ENCODE measurements at regions of chr16 and their contacts with region 1.

Region 1: GRCh38 chr16:68528686-68529379 is 10.3 kb upstream of the ZFP90 start:
- DNase-seq: peak; percentile 90
- H3K4me3 ChIP-seq: no peak overlapping the region
- H3K27ac ChIP-seq: no peak overlapping the region
- H3K4me1 ChIP-seq: peaks cover 12% of the 10 kb centered on the region
- CTCF ChIP-seq: peak; percentile 87

Region 2: GRCh38 chr16:68590201-68590994 is 61.6 kb after region 1 on chr16:
- CTCF ChIA-PET with region 1: no interaction called
- POLR2A ChIA-PET with region 1: no interaction called
- intact Hi-C with region 1: loop called (anchors 2 kb)
- DNase-seq: peak; percentile 34
- H3K4me3 ChIP-seq: no peak overlapping the region
- H3K27ac ChIP-seq: no peak overlapping the region
- H3K4me1 ChIP-seq: no peaks in the 10 kb centered on the region
- CTCF ChIP-seq: peak; percentile 67

Region 3: DNA sequence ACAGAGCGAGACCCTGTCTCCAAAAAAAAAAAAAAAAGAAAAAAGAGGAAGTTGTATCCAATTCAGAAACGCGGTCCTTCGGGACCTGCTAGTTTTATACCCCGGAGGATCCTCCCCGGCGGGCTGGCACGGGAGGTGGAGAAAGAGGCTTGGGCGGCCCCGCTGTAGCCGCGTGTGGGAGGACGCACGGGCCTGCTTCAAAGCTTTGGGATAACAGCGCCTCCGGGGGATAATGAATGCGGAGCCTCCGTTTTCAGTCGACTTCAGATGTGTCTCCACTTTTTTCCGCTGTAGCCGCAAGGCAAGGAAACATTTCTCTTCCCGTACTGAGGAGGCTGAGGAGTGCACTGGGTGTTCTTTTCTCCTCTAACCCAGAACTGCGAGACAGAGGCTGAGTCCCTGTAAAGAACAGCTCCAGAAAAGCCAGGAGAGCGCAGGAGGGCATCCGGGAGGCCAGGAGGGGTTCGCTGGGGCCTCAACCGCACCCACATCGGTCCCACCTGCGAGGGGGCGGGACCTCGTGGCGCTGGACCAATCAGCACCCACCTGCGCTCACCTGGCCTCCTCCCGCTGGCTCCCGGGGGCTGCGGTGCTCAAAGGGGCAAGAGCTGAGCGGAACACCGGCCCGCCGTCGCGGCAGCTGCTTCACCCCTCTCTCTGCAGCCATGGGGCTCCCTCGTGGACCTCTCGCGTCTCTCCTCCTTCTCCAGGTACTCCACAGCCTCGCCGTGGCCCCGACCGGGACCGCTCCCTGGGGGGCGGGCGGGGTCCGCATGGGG is 116.1 kb after region 1 on chr16 and contains the start of gene CDH3:
- CTCF ChIA-PET with region 1: no interaction called
- POLR2A ChIA-PET with region 1: no interaction called
- intact Hi-C with region 1: no loop called
- DNase-seq: no peak
- H3K4me3 ChIP-seq: no peak within 1 kb of the TSS
- H3K27ac ChIP-seq: no peak within 1 kb of the TSS
- H3K4me1 ChIP-seq: no peaks in the 10 kb centered on the region
- CTCF ChIP-seq: no peak
- total RNA-seq, gene CDH3: 0.06 TPM in 1 of 2 replicates, not detected in the other

Region 4: DNA sequence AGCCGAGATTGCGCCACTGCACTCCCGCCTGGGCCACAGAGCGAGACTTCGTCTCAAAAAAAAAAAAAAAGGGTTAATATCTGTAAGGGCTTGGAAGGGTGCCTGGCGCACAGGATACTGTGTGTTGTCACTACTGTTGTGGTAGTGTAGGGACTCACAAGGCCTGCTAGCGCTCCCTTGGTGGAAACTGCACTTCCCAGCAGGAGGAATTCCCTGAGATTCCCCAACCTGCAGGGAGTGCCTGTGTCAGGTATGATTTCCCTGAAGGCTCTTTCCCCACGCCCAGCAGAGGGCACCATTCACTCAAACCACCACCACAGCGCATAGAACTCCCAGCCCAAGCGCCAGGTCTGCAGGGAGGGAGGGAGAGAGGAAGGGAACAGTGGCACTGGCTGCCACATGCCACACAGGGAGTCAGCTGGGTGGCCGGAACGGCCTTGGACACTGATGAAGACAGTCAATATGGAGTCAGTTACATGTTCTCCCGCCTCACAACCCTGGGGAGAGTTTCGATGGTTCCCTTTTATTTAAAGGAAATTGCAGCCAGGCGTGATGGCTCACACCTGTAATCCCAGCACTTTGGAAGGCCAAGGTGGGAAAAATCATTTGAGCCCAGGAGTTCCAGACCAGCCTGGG is 175.5 kb after region 1 on chr16:
- CTCF ChIA-PET with region 1: no interaction called
- POLR2A ChIA-PET with region 1: no interaction called
- intact Hi-C with region 1: loop called (anchors 2 kb)
- DNase-seq: peak; percentile 59
- H3K4me3 ChIP-seq: no peak overlapping the region
- H3K27ac ChIP-seq: no peak overlapping the region
- H3K4me1 ChIP-seq: no peaks in the 10 kb centered on the region
- CTCF ChIP-seq: peak; percentile 82

Region 5: GRCh38 chr16:68800257-68800875 is 271.5 kb after region 1 on chr16:
- CTCF ChIA-PET with region 1: no interaction called
- POLR2A ChIA-PET with region 1: no interaction called
- intact Hi-C with region 1: loop called (anchors 1 kb)
- DNase-seq: peak; percentile 64
- H3K4me3 ChIP-seq: no peak overlapping the region
- H3K27ac ChIP-seq: no peak overlapping the region
- H3K4me1 ChIP-seq: no peaks in the 10 kb centered on the region
- CTCF ChIP-seq: peak; percentile 86

Region 6: DNA sequence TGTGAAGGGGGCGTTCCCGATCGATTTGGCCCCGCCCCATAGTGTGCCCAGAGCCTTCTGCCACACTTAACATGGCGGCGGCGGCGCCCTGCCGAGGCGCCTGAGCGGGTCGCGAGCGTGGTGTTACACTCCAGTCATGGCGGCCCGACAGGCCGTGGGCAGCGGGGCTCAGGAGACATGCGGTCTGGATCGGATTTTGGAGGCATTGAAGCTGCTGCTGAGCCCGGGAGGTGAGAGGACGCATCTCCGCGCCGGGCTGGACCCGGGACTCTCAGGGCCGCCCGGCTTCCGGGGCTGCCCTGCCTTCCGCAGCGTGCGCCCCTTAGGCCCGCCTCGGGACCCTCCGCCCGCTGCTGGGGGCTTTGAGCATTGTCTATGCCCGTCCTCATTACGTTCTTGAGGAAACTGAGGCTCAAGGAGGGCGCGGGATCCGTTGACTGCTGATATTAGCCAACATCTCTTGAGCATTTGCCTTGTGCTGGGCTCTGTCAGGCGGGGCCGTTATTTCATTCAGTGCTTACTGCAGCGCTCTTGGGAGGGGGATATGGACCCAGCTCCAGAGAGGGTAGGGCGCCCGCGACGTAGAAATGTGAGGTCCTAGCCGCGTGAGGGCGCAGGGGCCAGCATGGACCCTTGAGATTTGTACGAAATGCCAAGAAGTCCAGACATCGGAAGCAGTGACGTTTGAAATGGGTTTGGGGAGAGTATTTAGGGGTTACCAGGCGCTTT is 314.8 kb after region 1 on chr16 and contains the start of gene TANGO6:
- CTCF ChIA-PET with region 1: no interaction called
- POLR2A ChIA-PET with region 1: interaction called, 3 read pairs
- intact Hi-C with region 1: loop called (anchors 10 kb)
- DNase-seq: peak; percentile 91
- H3K4me3 ChIP-seq: peak within 1 kb of the TSS; percentile 76
- H3K27ac ChIP-seq: peak within 1 kb of the TSS; percentile 67
- H3K4me1 ChIP-seq: peaks cover 9% of the 10 kb centered on the region
- CTCF ChIP-seq: peak; percentile 81
- total RNA-seq, gene TANGO6: 17.3 and 22.8 TPM in 2 replicates

Region 7: DNA sequence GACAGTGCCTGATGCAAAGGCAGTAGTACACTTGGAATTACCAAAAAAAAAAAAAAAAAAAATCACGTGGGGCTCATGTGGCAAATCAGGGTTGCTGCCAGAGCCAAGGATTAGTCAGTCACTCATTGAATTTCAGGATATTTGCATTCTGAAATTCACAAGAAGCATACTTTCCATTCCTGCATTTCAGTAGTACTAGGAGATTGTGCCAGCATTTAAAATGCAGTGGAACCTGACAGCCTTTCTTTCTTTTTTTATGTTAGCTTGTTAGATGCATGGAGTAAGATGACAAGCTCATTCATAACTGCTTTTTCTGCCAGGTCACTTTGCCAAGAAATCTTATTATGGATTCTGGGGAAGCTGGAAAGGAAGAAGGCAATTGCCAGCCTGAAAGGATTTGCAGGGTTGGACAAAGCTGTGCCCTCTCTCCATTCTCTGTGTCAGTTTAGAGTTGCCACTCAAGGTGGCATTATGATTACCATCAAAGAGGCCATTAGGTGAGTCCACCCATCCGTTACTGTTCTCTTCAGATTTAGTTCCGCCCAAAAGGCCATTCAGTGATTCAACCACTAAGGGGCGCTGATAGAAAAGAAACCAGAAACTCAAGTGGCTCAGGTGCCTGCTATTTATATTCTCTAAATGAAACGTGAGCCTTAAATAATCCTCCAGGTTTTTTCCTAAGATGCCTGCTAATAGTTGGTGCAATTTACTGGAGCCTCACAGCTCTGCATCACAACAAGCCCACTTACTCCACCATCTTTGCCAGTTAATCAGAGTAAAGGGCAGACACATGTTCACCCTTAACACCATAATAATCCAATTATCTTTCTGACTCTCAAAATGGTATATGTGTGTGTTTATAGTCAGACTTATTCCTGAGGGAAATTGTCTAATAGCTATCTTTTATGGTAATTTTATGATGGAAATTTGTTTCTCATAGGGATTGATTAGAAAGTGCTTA is 373.5 kb after region 1 on chr16:
- CTCF ChIA-PET with region 1: no interaction called
- POLR2A ChIA-PET with region 1: no interaction called
- intact Hi-C with region 1: no loop called
- DNase-seq: peak; percentile 10
- H3K4me3 ChIP-seq: no peak overlapping the region
- H3K27ac ChIP-seq: no peak overlapping the region
- H3K4me1 ChIP-seq: no peaks in the 10 kb centered on the region
- CTCF ChIP-seq: peak; percentile 70